ENCODE measurements at regions of chr2 and their contacts with region 1.

Region 1: GRCh38 chr2:127453392-127454171 is 35.4 kb downstream of the PROC start:
- DNase-seq: peak; percentile 46
- H3K4me3 ChIP-seq: no peak overlapping the region
- H3K27ac ChIP-seq: no peak overlapping the region
- H3K4me1 ChIP-seq: no peaks in the 10 kb centered on the region
- CTCF ChIP-seq: peak; percentile 86

Region 2: DNA sequence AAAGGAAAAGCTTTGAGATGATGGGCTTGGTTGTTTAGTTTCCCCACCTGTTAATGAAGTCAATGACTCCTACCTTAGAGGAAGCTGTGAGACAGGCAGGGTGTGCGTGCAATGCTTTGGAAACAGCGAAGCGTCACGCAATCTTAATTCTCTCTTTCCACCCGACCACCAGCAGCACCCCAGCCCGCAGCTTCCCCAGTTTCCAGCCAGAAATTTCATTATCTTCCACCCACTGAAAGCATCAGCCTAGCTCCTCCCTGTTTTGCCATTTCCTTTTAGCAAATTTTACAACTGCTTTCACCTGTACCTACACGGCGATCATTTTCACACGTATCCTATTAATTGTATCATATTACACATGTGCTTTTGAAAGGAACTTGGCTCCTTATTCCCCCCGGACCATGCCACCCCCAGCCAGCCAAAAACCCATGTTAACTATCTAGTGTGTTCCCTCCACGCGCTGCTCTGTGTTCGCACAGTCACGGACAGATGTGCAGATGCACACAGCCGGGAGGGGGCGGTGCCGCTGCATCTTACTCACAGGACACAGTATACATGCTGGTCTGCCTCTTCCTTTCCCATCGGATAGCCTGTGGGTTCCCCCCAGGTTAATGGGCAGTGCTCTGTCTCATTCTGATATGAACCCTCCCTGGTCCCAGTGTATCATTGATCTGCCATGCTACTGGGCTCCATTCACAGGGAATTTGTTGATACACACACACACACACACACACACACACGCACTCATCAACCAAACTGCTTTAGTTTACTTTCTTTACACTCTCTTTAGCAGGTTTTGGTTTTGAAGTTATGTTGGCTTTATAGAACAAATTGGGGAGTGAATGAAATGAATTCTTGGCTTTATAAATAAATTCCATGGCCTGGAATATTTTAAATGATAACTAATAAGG is 255.9 kb before region 1 on chr2:
- CTCF ChIA-PET with region 1: no interaction called
- POLR2A ChIA-PET with region 1: no interaction called
- intact Hi-C with region 1: loop called (anchors 1 kb)
- DNase-seq: peak; percentile 56
- H3K4me3 ChIP-seq: no peak overlapping the region
- H3K27ac ChIP-seq: no peak overlapping the region
- H3K4me1 ChIP-seq: no peaks in the 10 kb centered on the region
- CTCF ChIP-seq: peak; percentile 73

Region 3: GRCh38 chr2:127324635-127325034 is 128.9 kb before region 1 on chr2:
- CTCF ChIA-PET with region 1: no interaction called
- POLR2A ChIA-PET with region 1: no interaction called
- intact Hi-C with region 1: loop called (anchors 1 kb)
- DNase-seq: peak; percentile 55
- H3K4me3 ChIP-seq: no peak overlapping the region
- H3K27ac ChIP-seq: no peak overlapping the region
- H3K4me1 ChIP-seq: no peaks in the 10 kb centered on the region
- CTCF ChIP-seq: peak; percentile 95

Region 4: DNA sequence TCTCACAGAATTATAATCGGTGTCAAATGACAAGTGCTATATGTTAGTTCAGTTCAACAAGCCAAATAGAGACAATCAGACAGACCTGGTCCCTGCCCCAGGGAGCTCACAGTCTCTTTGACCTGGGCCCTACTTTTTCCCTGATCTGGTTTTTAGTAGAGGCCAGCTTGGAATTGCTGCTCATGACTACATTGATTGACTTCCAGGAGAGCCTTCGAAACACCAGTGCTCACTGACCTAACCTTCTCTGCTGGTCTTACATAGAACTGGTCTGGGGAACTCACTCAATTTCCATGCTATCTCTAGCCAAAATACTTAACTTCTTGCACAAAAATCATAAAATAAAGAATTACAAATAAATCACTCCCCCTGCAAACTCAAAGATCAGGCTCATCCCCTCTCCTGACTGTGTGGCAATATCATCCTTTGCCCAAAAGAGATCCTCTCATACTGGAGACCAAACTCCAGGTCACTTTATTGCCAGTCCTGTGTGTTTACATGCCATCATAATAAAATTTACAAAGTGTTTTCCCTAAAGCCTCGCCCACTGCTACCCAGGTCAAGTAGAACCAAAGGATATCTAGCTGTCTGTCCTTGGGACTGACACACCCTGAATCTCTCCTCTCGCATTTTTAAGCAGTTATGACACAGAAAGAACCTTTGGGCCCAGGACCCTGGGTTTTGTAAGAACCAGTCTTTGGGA is 17.9 kb after region 1 on chr2:
- CTCF ChIA-PET with region 1: no interaction called
- POLR2A ChIA-PET with region 1: no interaction called
- intact Hi-C with region 1: no loop called
- DNase-seq: no peak
- H3K4me3 ChIP-seq: no peak overlapping the region
- H3K27ac ChIP-seq: no peak overlapping the region
- H3K4me1 ChIP-seq: no peaks in the 10 kb centered on the region
- CTCF ChIP-seq: no peak

Region 5: GRCh38 chr2:127576433-127577207 is 123.0 kb after region 1 on chr2:
- CTCF ChIA-PET with region 1: no interaction called
- POLR2A ChIA-PET with region 1: no interaction called
- intact Hi-C with region 1: no loop called
- DNase-seq: no peak
- H3K4me3 ChIP-seq: no peak overlapping the region
- H3K27ac ChIP-seq: no peak overlapping the region
- H3K4me1 ChIP-seq: peaks cover 16% of the 10 kb centered on the region
- CTCF ChIP-seq: no peak

Region 6: GRCh38 chr2:127707890-127708648 is 254.5 kb after region 1 on chr2:
- CTCF ChIA-PET with region 1: no interaction called
- POLR2A ChIA-PET with region 1: no interaction called
- intact Hi-C with region 1: no loop called
- DNase-seq: no peak
- H3K4me3 ChIP-seq: no peak overlapping the region
- H3K27ac ChIP-seq: no peak overlapping the region
- H3K4me1 ChIP-seq: peaks cover 11% of the 10 kb centered on the region
- CTCF ChIP-seq: no peak

Region 7: DNA sequence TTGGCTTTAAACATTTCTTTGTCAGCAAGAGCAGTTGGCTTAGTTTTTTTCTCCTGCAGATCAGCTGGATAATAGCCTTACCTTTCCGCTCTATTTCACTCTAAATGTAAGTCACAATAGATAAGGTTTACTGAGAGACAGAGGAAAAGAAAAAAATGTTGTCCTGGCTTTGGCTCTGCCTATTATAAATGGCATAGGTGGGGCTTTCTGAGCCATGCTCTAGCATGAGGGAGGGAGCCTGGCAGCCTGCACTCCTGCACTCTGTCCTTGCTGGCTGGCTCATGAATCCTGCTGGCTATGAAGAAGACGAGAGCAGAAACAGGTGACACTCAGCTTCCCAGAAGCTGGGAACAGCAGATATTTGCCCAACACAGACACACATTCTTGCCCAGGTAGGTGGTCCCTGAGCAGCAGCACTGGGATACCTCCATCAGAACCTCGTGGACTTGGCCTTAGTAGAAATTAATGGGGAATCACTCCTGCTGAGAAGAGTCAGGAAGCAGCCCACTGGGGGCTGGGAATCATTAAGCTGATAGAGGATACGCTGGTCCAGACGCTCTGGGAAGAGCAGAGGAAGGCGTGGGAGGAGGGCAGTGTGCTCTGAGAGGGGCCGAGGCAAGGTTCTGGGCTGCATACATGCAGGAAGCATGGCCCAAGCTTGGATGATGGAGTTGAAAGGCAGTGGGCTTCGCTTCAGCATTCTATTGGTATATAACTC is 1379.5 kb after region 1 on chr2:
- CTCF ChIA-PET with region 1: no interaction called
- POLR2A ChIA-PET with region 1: no interaction called
- intact Hi-C with region 1: no loop called
- DNase-seq: no peak
- H3K4me3 ChIP-seq: no peak overlapping the region
- H3K27ac ChIP-seq: no peak overlapping the region
- H3K4me1 ChIP-seq: no peaks in the 10 kb centered on the region
- CTCF ChIP-seq: no peak

Measured in OCI-LY7 (cell line).